HEK293T (cell line): ENCODE measurements at regions of chr11 and their contacts with region 1.

Region 1: DNA sequence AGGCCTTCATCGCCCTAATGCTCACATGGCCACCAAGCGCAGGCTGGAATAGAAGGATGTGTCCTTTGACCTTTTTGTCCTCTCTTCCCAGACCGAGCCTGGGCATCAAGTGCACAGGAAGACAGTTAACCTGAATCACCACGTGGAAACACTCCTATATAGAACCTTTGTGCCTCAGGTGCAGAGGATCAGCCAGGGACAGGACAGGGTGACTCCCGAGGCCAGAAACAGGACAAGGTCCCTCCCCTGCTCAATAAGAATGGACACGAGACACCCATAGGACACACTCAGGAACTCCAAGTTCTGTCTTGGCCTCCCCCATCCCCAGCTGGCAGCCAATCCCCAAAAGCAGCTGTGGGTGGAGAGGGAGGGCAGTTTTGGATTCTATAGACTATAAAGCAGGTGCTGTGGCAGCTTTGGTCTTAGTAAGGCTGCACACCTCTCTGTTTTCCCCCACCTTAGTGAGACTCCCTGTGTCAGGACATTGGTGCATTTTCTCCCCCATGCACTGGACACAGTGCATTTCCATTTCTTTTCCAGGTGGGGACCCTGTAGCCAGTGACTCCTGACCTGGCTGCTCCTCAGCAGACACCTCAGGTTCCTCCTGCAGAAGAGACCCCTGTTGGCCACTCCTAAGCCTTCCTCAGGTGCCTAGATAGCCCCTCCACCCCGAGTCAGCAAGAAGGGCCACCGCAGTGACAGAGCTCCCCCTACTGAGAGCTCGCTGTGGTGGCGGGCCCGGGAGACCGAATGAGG is 43.6 kb upstream of the POU2AF1 start:
- DNase-seq: peak; percentile 71

Region 2: DNA sequence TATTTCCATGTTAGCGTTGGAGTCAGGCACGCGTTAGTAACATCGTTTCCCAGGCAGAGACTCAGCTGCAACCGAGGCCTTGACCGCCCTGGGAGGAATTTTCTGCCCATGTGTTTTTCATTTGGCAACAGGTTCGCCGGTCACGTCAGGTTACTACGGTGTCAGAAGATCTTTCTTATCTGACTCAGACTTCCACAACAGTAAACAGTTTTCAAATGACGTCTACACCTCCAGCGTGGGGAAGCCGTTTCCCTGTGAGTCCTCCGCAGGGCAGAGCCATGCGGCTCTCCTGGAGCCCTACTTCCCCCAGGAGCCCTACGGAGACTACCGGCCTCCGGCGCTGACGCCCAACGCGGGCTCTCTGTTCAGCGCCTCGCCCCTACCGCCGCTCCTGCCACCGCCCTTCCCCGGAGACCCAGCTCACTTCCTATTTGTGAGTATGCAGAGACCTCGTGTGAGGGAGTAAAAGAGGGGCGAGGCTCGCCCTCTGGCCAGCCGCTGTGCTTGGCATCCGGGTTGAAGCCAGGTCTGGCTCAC is 138.7 kb before region 1 on chr11:
- CTCF ChIA-PET with region 1: interaction called, 18 read pairs
- POLR2A ChIA-PET with region 1: no interaction called
- DNase-seq: no peak